ENCODE measurements at regions of chr9 and their contacts with region 1.

Region 1: DNA sequence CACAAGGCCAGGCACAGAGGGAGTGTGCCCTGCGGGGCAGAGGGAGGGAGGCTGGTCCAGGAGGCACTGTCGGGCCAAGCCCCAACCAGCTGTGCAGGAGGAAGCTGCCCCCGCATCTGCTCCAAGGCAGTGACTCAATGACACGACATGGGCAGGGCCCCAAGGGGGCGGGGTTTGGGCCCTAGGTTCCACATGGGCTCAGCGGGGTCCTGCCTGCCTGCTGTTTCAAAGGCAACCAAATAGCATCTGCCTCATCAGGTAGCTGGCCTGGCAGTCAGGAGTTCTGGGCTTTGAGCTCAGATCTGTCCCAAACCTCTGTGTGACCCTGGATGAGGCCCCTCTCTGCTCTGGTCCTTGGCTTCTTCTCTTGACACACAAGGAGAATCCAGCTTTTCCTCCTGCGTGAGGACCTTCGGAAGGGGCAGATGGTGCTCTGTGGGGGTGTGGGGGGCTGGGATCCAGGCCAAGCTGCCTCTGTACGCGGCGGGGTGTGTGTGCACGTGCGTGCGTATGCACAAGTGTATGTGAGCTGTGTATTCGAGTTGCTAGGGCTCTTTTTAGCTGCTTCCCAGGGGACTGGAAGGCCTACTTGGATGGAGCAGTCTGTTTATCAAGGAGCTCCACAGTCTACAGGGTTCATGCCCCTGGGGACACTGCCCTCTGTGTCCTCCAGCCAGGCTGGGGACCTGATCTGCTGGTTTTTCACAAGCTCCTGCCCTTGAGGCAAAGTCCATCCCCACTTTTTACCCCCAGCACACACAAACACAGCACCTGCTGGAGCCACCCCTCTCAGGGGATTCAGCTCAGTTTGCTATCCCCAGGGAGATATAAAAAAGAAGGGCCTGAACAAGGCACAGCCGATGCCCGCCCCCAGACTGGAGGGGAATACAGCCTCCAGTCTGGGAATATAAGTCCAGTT is 138.9 kb downstream of the RGS3 start:
- DNase-seq: peak; percentile 33 to 46
- H3K4me3 ChIP-seq: no peak overlapping the region
- H3K27ac ChIP-seq: no peak overlapping the region
- H3K4me1 ChIP-seq: peaks cover 10% of the 10 kb centered on the region; the same call in 1 of the 2 replicates
- H3K27me3 ChIP-seq: no peaks in the 10 kb centered on the region
- CTCF ChIP-seq: no peak

Region 2: DNA sequence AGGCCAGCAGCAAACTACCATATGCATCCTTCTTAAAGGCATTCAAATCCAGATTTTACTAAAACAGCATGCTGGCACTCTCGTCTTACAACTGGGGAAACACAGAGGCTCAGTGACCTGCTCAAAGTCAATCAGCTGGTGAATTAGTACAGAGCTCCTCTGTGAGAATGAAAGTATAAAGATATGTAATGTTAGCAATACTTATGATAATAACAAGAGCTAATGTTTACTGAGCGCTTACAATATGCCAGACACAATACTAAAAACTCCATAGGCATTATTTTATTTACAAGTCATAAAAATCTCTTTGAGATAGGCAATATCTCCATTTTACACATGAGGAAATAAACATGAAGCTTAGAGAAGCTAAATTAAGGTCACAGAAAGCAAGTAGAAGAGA is 409.9 kb before region 1 on chr9:
- CTCF ChIA-PET with region 1: no interaction called
- POLR2A ChIA-PET with region 1: no interaction called
- intact Hi-C with region 1: no loop called
- DNase-seq: no peak
- H3K4me3 ChIP-seq: no peak overlapping the region
- H3K27ac ChIP-seq: no peak overlapping the region
- H3K4me1 ChIP-seq: peaks cover 14% of the 10 kb centered on the region
- H3K27me3 ChIP-seq: no peaks in the 10 kb centered on the region
- CTCF ChIP-seq: no peak

Region 3: DNA sequence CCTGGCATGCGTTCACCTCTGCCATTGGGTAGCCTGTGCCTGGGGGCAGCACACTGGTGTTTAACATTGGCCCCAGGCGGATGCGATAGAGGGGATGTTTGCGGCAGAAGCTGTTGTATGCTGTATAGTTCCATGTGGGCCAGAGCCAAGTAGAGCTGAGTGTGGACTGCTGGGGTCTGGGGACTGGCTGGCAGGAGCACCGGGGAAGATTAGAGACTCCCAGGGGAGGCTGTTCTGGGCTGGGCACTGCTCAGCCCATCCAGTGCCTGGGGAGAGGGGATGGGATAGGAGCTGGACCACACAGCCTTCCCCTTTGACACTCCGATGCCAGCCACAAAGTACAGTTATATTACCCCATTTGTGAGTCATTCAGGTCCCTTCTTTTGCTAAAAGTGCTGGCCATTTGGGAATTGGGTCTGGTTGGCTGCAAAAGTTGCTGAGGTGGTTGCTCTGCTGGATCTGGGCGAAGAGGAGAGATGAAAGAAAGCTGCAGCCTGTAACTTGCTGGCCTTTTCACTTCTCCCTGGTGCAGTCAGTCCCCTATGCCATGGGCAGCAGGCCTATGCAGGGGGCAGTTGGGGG is 65.1 kb before region 1 on chr9:
- CTCF ChIA-PET with region 1: interaction called, 11 read pairs
- POLR2A ChIA-PET with region 1: no interaction called
- intact Hi-C with region 1: no loop called
- DNase-seq: no peak
- H3K4me3 ChIP-seq: no peak overlapping the region
- H3K27ac ChIP-seq: no peak overlapping the region
- H3K4me1 ChIP-seq: no peaks in the 10 kb centered on the region
- H3K27me3 ChIP-seq: no peaks in the 10 kb centered on the region
- CTCF ChIP-seq: no peak

Region 4: GRCh38 chr9:113564498-113565237 is 37.7 kb before region 1 on chr9:
- CTCF ChIA-PET with region 1: no interaction called
- POLR2A ChIA-PET with region 1: interaction called, 12 read pairs
- intact Hi-C with region 1: no loop called
- DNase-seq: peak; percentile 46 to 74
- H3K4me3 ChIP-seq: peak overlapping the region; percentile 69
- H3K27ac ChIP-seq: peak overlapping the region; percentile 90
- H3K4me1 ChIP-seq: peaks cover 25% of the 10 kb centered on the region
- H3K27me3 ChIP-seq: no peaks in the 10 kb centered on the region
- CTCF ChIP-seq: no peak

Region 5: DNA sequence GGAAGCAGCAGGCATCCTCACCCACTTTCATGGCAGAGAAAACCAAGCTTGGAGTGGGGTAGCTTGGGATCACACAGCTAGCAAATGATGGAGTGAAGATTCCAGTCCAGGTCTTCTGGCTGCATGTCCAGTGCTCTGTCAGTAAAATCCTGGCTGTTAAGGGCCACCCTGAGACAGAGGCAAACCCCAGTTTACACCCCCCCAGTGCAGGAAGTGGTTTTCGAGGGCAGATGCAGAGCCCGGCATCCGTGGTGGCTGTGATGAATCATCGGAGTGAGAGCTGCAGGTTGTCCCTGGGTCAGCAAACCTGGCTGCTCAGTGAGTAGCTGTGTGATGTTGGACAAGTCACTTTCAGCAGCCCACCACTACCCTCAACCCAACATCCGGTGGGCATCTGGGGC is 23.5 kb before region 1 on chr9:
- CTCF ChIA-PET with region 1: no interaction called
- POLR2A ChIA-PET with region 1: no interaction called
- intact Hi-C with region 1: no loop called
- DNase-seq: peak; percentile 91 to 92
- H3K4me3 ChIP-seq: peak overlapping the region; percentile 45; the same call in 1 of the 2 replicates
- H3K27ac ChIP-seq: peak overlapping the region; percentile 93
- H3K4me1 ChIP-seq: peaks cover 73% of the 10 kb centered on the region
- H3K27me3 ChIP-seq: no peaks in the 10 kb centered on the region
- CTCF ChIP-seq: no peak

Region 6: GRCh38 chr9:113622600-113623400 is 20.4 kb after region 1 on chr9:
- CTCF ChIA-PET with region 1: no interaction called
- POLR2A ChIA-PET with region 1: interaction called, 9 read pairs
- intact Hi-C with region 1: loop called (anchors 2 kb)
- DNase-seq: peak; percentile 86
- H3K4me3 ChIP-seq: no peak overlapping the region
- H3K27ac ChIP-seq: peak overlapping the region; percentile 56
- H3K4me1 ChIP-seq: peaks cover 42% of the 10 kb centered on the region
- H3K27me3 ChIP-seq: no peaks in the 10 kb centered on the region
- CTCF ChIP-seq: no peak